ENCODE measurements at regions of chr13 and their contacts with region 1.

Region 1: DNA sequence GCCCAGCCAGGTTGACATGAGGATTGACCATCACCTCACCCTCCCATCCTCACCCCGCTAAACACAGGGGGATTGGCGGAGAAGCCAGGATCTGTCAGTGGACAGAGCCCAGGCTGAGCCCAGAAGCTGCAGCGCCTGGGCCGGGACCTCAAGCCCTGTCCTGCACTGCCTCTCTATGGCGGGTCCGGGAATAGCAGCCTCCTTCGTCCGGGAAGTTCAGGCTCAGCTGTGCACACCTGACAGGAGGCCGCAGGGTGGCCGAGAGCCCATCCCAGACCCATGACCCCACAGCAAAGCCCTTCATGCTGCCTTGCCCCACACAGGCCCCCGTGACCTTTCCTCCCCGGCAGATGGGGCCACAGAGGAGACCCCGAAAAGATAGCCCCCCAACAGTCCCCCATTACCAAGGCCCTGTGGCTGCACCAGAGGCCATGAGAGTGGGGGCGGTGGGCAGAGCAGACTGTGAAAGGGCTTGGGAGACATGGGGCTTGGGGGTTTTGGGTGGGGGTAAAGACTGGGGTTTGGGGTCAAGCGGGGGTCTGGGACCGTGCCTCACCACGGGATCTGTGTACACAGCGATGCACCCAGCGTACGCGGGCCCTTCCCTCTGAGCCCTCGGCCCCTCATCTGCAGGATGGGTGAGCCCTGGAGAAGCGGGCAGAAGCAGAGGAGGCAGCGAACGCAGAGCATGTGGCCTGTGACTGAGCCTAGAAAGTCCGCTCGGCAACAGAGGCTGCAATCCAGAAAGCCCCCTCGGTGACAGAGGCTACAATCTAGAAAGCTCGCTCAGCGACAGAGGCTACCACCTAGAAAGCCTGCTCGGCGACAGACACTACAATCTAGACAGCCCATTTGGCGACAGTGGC is 68.1 kb downstream of the SPACA7 start:
- DNase-seq: no peak
- ATAC-seq: peak; percentile 91
- H3K4me3 ChIP-seq: no peak overlapping the region
- H3K27ac ChIP-seq: no peak overlapping the region
- H3K4me1 ChIP-seq: no peaks in the 10 kb centered on the region
- H3K27me3 ChIP-seq: no peaks in the 10 kb centered on the region
- CTCF ChIP-seq: peak; percentile 78 to 93 (median 81)
- EP300 ChIP-seq: no peak
- POLR2A ChIP-seq: no peak
- RAD21 ChIP-seq: peak; percentile 79

Region 2: GRCh38 chr13:111076156-111077013 is 1367.8 kb before region 1 on chr13:
- CTCF ChIA-PET with region 1: no interaction called
- POLR2A ChIA-PET with region 1: no interaction called
- RAD21 ChIA-PET with region 1: no interaction called
- SMC1A ChIA-PET with region 1: no interaction called
- in situ Hi-C with region 1: loop called (anchors 25 kb)
- intact Hi-C with region 1: no loop called
- DNase-seq: no peak
- ATAC-seq: no peak
- H3K4me3 ChIP-seq: no peak overlapping the region
- H3K27ac ChIP-seq: no peak overlapping the region
- H3K4me1 ChIP-seq: no peaks in the 10 kb centered on the region
- H3K27me3 ChIP-seq: peaks cover 0 to 1% of the 10 kb centered on the region in 2 experiments; a peak in 1 of 4 replicates
- CTCF ChIP-seq: no peak
- EP300 ChIP-seq: no peak
- POLR2A ChIP-seq: no peak
- RAD21 ChIP-seq: no peak

Region 3: DNA sequence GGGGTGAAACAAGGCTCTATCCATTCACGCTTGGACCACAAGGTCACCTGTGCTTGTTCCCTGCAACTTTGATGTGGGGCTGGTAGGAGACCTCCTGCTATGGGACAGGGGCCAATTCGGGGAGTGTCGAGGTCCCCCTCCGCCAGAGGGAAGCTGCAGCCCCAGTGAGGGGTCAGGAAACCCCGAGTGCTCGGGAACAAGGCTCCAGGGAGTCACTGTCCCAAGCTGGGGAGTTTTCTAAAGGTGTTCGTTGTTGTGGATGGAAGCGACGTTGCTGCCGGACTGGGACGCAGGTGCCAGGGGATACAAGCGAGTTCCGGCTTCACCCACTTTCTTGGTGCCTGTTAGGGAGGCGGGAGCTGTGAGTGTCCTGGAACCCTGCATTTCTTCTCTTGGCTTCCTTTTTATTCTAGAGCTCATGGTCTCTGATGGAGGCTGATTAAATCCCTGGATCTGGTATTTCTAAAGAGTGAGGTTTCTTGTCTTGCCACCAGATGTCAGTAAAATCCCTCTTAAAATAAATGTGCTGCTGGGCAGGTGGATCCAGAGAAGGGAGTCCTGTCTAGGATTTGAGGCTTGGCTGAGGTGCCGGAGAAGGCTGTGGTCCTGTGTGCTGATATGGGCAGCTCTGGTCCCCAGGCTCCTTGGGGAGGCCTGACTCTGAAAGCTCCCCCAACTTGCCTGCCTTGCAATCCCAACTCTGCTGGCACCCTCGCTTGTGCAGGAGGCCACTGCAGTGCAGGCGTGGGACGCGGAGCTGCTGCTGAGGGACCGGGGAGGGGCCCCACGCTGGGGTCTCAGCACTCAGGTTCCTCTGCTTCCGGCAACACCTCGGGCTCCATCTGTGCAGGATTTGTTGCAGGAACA is 969.9 kb before region 1 on chr13:
- CTCF ChIA-PET with region 1: interaction called, 14 read pairs
- POLR2A ChIA-PET with region 1: no interaction called
- RAD21 ChIA-PET with region 1: interaction called, 12 read pairs
- SMC1A ChIA-PET with region 1: interaction called, 4 read pairs
- in situ Hi-C with region 1: loop called (anchors 5 kb)
- intact Hi-C with region 1: loop called (anchors 1 kb)
- DNase-seq: no peak
- ATAC-seq: peak; percentile 68
- H3K4me3 ChIP-seq: no peak overlapping the region
- H3K27ac ChIP-seq: no peak overlapping the region
- H3K4me1 ChIP-seq: no peaks in the 10 kb centered on the region
- H3K27me3 ChIP-seq: no peaks in the 10 kb centered on the region
- CTCF ChIP-seq: peak; percentile 39 to 51 (median 40); a peak in 5 of 6 replicates
- EP300 ChIP-seq: no peak
- POLR2A ChIP-seq: no peak
- RAD21 ChIP-seq: peak; percentile 75

Region 4: GRCh38 chr13:112024577-112024976 is 419.7 kb before region 1 on chr13:
- CTCF ChIA-PET with region 1: no interaction called
- POLR2A ChIA-PET with region 1: no interaction called
- RAD21 ChIA-PET with region 1: no interaction called
- SMC1A ChIA-PET with region 1: no interaction called
- in situ Hi-C with region 1: no loop called
- intact Hi-C with region 1: no loop called
- DNase-seq: no peak
- ATAC-seq: no peak
- H3K4me3 ChIP-seq: no peak overlapping the region
- H3K27ac ChIP-seq: no peak overlapping the region
- H3K4me1 ChIP-seq: no peaks in the 10 kb centered on the region
- H3K27me3 ChIP-seq: no peaks in the 10 kb centered on the region
- CTCF ChIP-seq: no peak
- EP300 ChIP-seq: no peak
- POLR2A ChIP-seq: no peak
- RAD21 ChIP-seq: no peak

Region 5: GRCh38 chr13:112481458-112481857 is 37.2 kb after region 1 on chr13:
- CTCF ChIA-PET with region 1: no interaction called
- POLR2A ChIA-PET with region 1: no interaction called
- RAD21 ChIA-PET with region 1: no interaction called
- SMC1A ChIA-PET with region 1: no interaction called
- in situ Hi-C with region 1: no loop called
- intact Hi-C with region 1: no loop called
- DNase-seq: no peak
- ATAC-seq: no peak
- H3K4me3 ChIP-seq: no peak overlapping the region
- H3K27ac ChIP-seq: no peak overlapping the region
- H3K4me1 ChIP-seq: no peaks in the 10 kb centered on the region
- H3K27me3 ChIP-seq: no peaks in the 10 kb centered on the region
- CTCF ChIP-seq: no peak
- EP300 ChIP-seq: no peak
- POLR2A ChIP-seq: no peak
- RAD21 ChIP-seq: no peak